OCI-LY7 (cell line): ENCODE measurements at regions of chr15 and their contacts with region 1.

Region 1: GRCh38 chr15:31435261-31435911 is 108.8 kb downstream of the KLF13 start:
- DNase-seq: peak; percentile 94
- H3K4me3 ChIP-seq: peak overlapping the region; percentile 43
- H3K27ac ChIP-seq: peak overlapping the region; percentile 72
- H3K4me1 ChIP-seq: peaks cover 60% of the 10 kb centered on the region
- CTCF ChIP-seq: peak; percentile 98

Region 2: GRCh38 chr15:30903497-30904201 is 531.7 kb before region 1 on chr15 and contains the start of gene FAN1:
- CTCF ChIA-PET with region 1: no interaction called
- POLR2A ChIA-PET with region 1: no interaction called
- intact Hi-C with region 1: loop called (anchors 10 kb)
- DNase-seq: peak; percentile 88
- H3K4me3 ChIP-seq: peak within 1 kb of the TSS; percentile 74
- H3K27ac ChIP-seq: peak within 1 kb of the TSS; percentile 13
- H3K4me1 ChIP-seq: peaks cover 14% of the 10 kb centered on the region
- CTCF ChIP-seq: 0 out of 2 replicates have a peak, but pooled peaks have one; percentile 16
- total RNA-seq, gene FAN1: 15.4 and 16.4 TPM in 2 replicates

Region 3: DNA sequence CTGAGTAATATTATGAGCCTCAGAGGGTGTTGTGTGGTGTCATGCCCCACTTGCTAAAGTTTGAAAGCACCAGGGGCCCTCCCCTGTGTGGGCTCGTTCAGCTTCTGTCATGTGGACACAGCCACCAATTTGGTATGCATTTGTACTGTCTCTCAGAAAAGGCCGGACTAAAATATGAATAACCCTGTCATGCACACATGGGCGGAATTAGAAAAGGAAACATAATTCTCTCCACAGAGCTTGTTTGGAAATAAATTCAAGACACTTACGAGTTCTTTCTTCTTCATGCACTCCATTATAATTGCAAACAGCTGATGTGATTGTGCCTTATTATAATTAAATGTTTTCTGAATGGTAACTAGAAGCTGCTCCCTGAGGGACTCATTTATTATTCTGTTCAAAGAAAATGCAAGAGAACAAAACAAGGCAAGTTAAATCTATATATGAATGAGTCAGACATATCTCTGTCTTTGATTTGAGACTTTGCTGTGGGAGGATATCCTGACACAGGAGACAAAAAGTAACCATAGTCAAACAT is 373.0 kb before region 1 on chr15:
- CTCF ChIA-PET with region 1: no interaction called
- POLR2A ChIA-PET with region 1: no interaction called
- intact Hi-C with region 1: no loop called
- DNase-seq: no peak
- H3K4me3 ChIP-seq: no peak overlapping the region
- H3K27ac ChIP-seq: no peak overlapping the region
- H3K4me1 ChIP-seq: no peaks in the 10 kb centered on the region
- CTCF ChIP-seq: no peak

Region 4: DNA sequence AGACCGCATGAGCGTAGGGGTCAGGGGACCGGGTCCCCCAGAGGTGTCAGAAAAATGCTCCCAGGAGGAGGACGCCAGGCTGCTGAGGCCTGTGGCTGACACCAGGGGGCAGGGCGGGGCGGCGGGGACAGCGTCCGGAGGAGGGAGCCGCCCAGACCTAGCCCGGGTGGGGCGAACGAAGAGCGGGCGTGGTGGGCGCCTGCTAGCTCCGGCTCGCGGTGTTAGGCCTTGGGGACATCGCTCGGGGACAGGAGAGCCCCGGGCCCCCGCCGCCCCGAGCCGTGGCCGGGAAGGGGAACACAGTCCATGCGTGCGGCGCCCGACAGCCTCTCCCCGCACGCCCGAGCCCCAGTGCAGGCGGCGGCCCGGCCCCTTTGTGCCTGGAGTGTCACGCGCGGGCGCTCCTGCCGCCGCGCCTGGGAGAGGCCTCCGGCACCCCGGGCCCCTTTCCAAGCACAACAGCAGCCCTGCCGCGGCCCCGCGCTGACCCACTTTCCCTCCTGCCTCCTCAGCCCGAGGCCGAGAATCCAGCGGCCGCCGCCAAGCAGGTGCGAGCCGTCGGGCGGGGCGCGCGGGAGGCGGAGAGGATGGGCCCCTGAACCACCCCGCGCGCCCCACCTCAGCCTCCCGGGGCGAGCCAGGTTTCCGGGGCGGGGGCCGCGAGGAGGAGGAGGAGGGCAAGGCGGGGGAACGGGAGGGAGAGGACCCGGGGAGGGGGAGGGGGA is 219.7 kb before region 1 on chr15:
- CTCF ChIA-PET with region 1: interaction called, 12 read pairs
- POLR2A ChIA-PET with region 1: interaction called, 3 read pairs
- intact Hi-C with region 1: loop called (anchors 1 kb)
- DNase-seq: peak; percentile 87
- H3K4me3 ChIP-seq: peak overlapping the region; percentile 70
- H3K27ac ChIP-seq: peak overlapping the region; percentile 82
- H3K4me1 ChIP-seq: peaks cover 49% of the 10 kb centered on the region
- CTCF ChIP-seq: peak; percentile 83

Region 5: DNA sequence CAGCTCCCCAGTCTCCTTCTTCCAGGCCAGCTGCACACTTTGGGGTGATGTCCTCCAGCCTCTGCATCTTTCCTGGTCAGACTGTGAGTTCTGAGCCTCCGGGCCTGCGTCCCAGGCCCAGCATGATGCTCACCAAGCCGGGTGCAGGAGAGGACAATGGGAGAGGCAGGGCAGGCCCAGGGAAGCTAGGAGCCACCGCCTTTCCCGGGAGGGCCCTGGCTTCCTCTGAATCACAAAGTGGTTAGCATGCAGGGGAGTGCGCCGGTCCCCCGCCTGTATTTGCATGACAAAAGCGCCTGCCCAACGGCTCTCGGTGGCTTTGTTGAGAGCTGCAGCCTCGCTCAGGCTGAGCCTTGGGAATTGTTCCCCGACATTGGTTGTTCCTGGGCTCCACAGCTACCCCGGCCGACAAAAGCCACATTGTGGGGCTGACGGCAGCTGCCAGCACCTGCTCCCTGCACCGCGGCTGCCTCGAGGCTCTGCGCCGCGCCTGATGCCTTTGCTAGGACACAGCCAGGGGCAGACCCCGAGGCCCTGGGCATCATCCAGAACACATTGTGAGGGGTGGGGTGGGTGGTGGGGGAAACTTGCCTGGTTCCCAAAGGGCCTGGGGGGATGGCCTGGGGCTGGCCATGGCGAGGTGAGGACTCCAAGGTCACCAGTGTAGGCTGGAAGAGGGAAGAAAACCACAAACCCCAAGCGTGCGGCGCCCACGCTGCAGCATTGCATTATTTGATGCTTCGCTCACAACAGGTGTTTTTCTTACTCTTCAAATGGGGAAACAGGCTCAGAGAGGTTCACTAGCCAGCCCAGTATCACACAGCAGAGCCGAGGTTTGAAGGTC is 128.7 kb before region 1 on chr15:
- CTCF ChIA-PET with region 1: interaction called, 5 read pairs
- POLR2A ChIA-PET with region 1: no interaction called
- intact Hi-C with region 1: loop called (anchors 2 kb)
- DNase-seq: peak; percentile 87
- H3K4me3 ChIP-seq: peak overlapping the region; percentile 56
- H3K27ac ChIP-seq: peak overlapping the region; percentile 87
- H3K4me1 ChIP-seq: peaks cover 90% of the 10 kb centered on the region
- CTCF ChIP-seq: no peak

Region 6: GRCh38 chr15:31344823-31345605 is 90.4 kb before region 1 on chr15:
- CTCF ChIA-PET with region 1: no interaction called
- POLR2A ChIA-PET with region 1: no interaction called
- intact Hi-C with region 1: loop called (anchors 5 kb)
- DNase-seq: peak; percentile 39
- H3K4me3 ChIP-seq: peak overlapping the region; percentile 57
- H3K27ac ChIP-seq: peak overlapping the region; percentile 84
- H3K4me1 ChIP-seq: peaks cover 98% of the 10 kb centered on the region
- CTCF ChIP-seq: no peak

Region 7: DNA sequence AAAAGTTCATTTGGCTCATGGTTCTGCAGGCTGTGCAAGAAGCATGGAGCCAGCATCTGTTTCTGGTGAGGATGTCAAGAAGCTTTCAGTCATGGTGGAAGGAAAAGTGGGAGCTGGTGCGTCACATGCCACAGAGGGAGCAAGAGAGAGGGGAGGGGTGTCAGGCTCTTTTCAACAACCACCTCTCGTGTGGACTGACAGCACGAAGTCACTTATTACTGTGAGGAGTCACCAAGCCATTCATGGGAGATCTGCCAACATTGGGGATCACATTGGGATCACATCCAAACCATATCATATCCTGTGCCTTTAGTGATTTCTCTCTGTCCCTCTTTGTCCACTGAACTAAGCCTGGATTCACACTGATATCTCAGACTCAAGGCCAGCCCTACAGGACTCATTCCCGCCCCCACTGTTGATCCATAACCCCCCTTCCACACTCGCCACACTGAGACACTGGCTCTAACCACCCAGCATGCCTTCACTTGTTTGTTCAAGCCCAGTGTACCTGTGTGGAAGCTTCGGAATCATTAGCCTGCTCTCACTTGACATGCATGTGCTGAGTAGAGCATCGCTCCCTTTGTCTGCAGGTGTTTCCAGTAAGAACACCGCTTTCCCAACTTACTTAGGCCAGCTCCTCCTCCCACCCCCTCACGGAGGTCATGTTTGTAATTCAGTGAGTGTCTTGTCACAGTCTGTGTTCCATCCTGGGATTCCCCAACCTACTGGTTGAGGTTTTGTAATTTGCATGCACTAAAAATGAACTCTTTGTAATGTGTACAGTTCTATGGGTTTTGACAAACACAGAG is 23.4 kb after region 1 on chr15:
- CTCF ChIA-PET with region 1: interaction called, 5 read pairs
- POLR2A ChIA-PET with region 1: interaction called, 14 read pairs
- intact Hi-C with region 1: no loop called
- DNase-seq: peak; percentile 88
- H3K4me3 ChIP-seq: peak overlapping the region; percentile 62
- H3K27ac ChIP-seq: peak overlapping the region; percentile 96
- H3K4me1 ChIP-seq: peaks cover 95% of the 10 kb centered on the region
- CTCF ChIP-seq: no peak